HepG2 (cell line): ENCODE measurements at regions of chr11 and their contacts with region 1.

Region 1: GRCh38 chr11:8566613-8567210 is 27.3 kb downstream of the STK33 start:
- DNase-seq: peak; percentile 23
- ATAC-seq: peak; percentile 44; the same call in 2 of the 3 replicates
- H3K4me3 ChIP-seq: no peak overlapping the region
- H3K27ac ChIP-seq: no peak overlapping the region
- H3K4me1 ChIP-seq: no peaks in the 10 kb centered on the region
- H3K27me3 ChIP-seq: no peaks in the 10 kb centered on the region
- CTCF ChIP-seq: peak; percentile 64
- EP300 ChIP-seq: no peak
- POLR2A ChIP-seq: no peak
- RAD21 ChIP-seq: 0 out of 2 replicates have a peak, but pooled peaks have one; percentile 40

Region 2: DNA sequence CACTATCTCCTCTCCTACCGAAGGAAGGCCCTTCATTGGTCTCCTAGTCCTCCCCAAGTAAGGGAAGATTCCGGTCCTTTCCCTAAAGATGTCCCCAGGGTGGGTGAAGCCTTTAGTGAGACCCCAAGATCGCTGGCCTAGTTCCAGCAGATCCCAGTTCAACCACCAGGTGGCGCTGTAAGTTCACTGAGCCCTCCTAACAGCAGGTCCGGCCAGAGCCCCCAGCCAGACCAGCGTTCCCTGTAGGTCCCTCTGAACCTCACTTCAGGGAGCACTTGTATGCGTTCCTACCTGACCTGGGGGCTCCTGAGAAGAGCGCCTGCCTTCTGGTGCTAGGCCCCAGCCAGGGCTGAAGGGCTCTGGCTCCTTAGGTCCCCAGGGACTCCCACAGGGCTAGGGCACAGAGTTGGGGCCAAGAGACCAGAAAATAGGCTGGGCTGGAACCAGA is 341.1 kb before region 1 on chr11:
- CTCF ChIA-PET with region 1: interaction called, 16 read pairs
- POLR2A ChIA-PET with region 1: no interaction called
- in situ Hi-C with region 1: loop called (anchors 5 kb)
- intact Hi-C with region 1: loop called (anchors 1 kb)
- DNase-seq: peak; percentile 39
- ATAC-seq: peak; percentile 86
- H3K4me3 ChIP-seq: no peak overlapping the region
- H3K27ac ChIP-seq: no peak overlapping the region
- H3K4me1 ChIP-seq: no peaks in the 10 kb centered on the region
- H3K27me3 ChIP-seq: peaks cover 0 to 29% of the 10 kb centered on the region in 2 experiments; a peak in 4 of 5 replicates
- CTCF ChIP-seq: peak; percentile 92
- EP300 ChIP-seq: no peak
- POLR2A ChIP-seq: no peak
- RAD21 ChIP-seq: peak; percentile 79

Region 3: DNA sequence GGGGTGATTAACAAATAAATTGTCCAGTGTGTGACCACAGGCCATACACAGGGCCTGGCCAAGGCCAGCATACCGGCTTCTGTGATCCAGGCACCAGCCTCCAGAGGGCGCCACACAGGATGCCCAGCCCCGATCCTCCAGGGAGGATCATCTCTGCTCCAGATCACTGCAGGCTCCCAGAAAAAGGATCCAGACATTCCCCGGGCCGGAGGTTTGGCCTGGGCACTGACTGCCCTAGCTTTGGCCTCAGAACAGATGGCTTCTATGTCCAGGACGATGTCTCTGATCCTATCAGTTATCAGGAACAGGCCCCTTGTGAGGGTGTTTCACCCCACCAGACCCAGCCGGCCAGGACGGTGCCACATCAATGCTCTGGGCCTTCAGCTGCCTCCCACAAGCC is 228.6 kb before region 1 on chr11:
- CTCF ChIA-PET with region 1: interaction called, 15 read pairs
- POLR2A ChIA-PET with region 1: no interaction called
- in situ Hi-C with region 1: loop called (anchors 5 kb)
- intact Hi-C with region 1: loop called (anchors 1 kb)
- DNase-seq: peak; percentile 18
- ATAC-seq: peak; percentile 86
- H3K4me3 ChIP-seq: no peak overlapping the region
- H3K27ac ChIP-seq: no peak overlapping the region
- H3K4me1 ChIP-seq: 0 out of 2 replicates have a peak, but pooled peaks cover 7% of the 10 kb centered on the region
- H3K27me3 ChIP-seq: peaks cover 1 to 4% of the 10 kb centered on the region in 2 experiments; a peak in 3 of 5 replicates
- CTCF ChIP-seq: peak; percentile 75
- EP300 ChIP-seq: no peak
- POLR2A ChIP-seq: no peak
- RAD21 ChIP-seq: peak; percentile 49; the same call in 1 of the 2 replicates

Region 4: DNA sequence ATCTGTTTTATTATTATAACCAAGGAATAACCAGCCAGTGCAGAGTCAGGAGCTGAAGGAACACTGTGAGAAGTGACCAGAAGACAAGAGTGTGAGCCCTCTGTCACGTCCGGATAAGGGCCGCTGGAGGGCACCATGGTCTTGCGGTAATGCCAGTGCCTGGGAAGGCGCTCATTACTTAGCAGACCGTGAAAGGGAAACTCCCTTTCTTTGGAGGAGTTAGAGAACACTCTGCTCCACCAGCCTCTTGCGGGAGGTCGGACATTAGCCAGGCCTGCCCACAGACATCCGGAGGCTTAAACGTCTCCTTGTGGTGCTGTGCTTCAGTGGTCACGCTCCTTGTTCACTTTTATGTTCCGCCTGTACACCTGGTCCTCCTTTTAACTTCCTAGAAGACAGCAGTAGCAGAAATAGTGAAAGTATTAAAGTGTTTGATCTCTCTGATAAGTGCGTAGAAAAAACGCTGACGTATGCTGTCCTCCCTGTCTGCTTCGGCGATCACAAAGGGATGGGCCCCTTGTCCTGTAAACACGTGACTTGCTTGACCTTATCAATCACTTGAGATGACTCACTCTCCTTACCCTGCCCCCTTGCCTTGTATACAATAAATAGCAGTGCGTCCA is 182.4 kb before region 1 on chr11:
- CTCF ChIA-PET with region 1: no interaction called
- POLR2A ChIA-PET with region 1: no interaction called
- in situ Hi-C with region 1: no loop called
- intact Hi-C with region 1: loop called (anchors 1 kb)
- DNase-seq: no peak
- ATAC-seq: no peak; the same call in 2 of the 3 replicates
- H3K4me3 ChIP-seq: no peak overlapping the region
- H3K27ac ChIP-seq: no peak overlapping the region
- H3K4me1 ChIP-seq: peaks cover 16% of the 10 kb centered on the region
- H3K27me3 ChIP-seq: no peaks in the 10 kb centered on the region
- CTCF ChIP-seq: peak; percentile 21; the same call in 1 of the 2 replicates
- EP300 ChIP-seq: no peak
- POLR2A ChIP-seq: no peak
- RAD21 ChIP-seq: no peak